Activated CD4-positive, alpha-beta T cell treated with anti-CD3 and anti-CD28 coated beads for 36 hours (primary cell): ENCODE measurements at regions of chr1 and their contacts with region 1.

Region 1: GRCh38 chr1:42035830-42036604 is 117.2 kb upstream of the GUCA2B start:
- DNase-seq: peak; percentile 99
- ATAC-seq: peak; percentile 92
- H3K4me3 Mint-ChIP-seq: peak overlapping the region; percentile 76
- H3K27ac Mint-ChIP-seq: peak overlapping the region; percentile 72
- H3K4me1 Mint-ChIP-seq: peaks cover 35% of the 10 kb centered on the region
- H3K27me3 Mint-ChIP-seq: no peaks in the 10 kb centered on the region

Region 2: GRCh38 chr1:41573785-41574713 is 462.0 kb before region 1 on chr1:
- CTCF ChIA-PET with region 1: no interaction called
- POLR2A ChIA-PET with region 1: no interaction called
- intact Hi-C with region 1: loop called in 1 of 2 experiments (anchors 1 kb)
- DNase-seq: peak; percentile 90
- ATAC-seq: peak; percentile 93
- H3K4me3 Mint-ChIP-seq: no peak overlapping the region
- H3K27ac Mint-ChIP-seq: peak overlapping the region; percentile 17
- H3K4me1 Mint-ChIP-seq: peaks cover 41% of the 10 kb centered on the region
- H3K27me3 Mint-ChIP-seq: no peaks in the 10 kb centered on the region

Region 3: DNA sequence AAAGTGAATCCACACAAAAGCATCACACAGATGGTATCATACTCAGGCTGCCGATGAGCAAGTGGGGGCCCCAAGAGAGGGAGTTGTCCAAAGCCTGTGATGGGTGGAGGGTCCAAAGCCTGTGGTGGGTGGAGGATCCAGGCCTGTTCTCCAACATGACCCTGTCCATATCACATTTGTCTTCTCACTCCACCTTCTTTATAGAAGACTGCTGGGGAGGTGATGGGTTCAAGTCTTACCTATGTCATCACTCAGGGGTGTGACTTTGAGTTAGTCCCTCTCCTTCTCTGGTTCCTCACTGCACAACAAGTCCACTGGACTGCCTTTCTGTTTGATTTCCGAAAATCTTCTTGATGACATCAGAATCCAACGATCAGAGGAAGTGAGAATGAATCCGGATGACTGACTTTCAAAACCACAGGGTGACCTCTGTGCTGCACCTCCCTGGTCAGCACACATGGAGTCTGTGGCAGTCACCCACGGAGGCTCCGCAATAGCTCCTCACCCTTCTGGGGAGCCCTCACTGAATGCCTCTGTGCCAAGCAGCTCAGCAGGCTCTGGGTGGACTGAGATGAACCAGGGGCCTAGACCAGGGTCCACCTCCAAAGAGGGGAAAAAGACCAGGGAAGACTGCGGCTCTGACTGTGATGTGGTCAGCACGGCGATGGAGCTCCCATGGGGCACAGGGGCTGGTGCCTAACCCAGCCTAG is 284.1 kb before region 1 on chr1:
- CTCF ChIA-PET with region 1: no interaction called
- POLR2A ChIA-PET with region 1: no interaction called
- intact Hi-C with region 1: loop called in 1 of 2 experiments (anchors 2 kb)
- DNase-seq: peak; percentile 30
- ATAC-seq: peak; percentile 17
- H3K4me3 Mint-ChIP-seq: no peak overlapping the region
- H3K27ac Mint-ChIP-seq: peak overlapping the region; percentile 90
- H3K4me1 Mint-ChIP-seq: peaks cover 73% of the 10 kb centered on the region
- H3K27me3 Mint-ChIP-seq: no peaks in the 10 kb centered on the region

Region 4: GRCh38 chr1:41830726-41831125 is 205.3 kb before region 1 on chr1:
- CTCF ChIA-PET with region 1: no interaction called
- POLR2A ChIA-PET with region 1: no interaction called
- intact Hi-C with region 1: no loop called
- DNase-seq: no peak
- ATAC-seq: no peak
- H3K4me3 Mint-ChIP-seq: no peak overlapping the region
- H3K27ac Mint-ChIP-seq: no peak overlapping the region
- H3K4me1 Mint-ChIP-seq: no peaks in the 10 kb centered on the region
- H3K27me3 Mint-ChIP-seq: peaks cover 2% of the 10 kb centered on the region

Region 5: DNA sequence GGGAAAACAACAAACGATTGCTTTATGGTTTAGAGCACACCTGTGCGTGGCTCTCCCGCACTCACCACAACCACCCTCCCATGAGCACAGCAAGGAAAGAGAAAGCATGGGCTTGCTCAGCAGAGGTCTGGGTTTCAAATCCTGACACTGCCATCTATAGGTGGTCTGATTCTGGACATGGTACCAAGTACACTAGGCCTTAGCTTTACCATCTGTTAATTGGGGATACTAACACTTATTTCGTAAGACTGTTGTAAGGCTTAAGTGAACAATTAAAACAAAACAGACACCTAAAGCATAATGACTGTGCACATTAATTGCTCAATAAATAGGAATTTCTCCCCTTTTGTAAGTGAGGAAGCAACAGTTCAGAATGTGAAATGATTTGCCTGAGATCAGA is 167.4 kb before region 1 on chr1:
- CTCF ChIA-PET with region 1: no interaction called
- POLR2A ChIA-PET with region 1: no interaction called
- intact Hi-C with region 1: loop called in 1 of 2 experiments (anchors 5 kb)
- DNase-seq: peak; percentile 61
- ATAC-seq: peak; percentile 85
- H3K4me3 Mint-ChIP-seq: no peak overlapping the region
- H3K27ac Mint-ChIP-seq: no peak overlapping the region
- H3K4me1 Mint-ChIP-seq: peaks cover 32% of the 10 kb centered on the region
- H3K27me3 Mint-ChIP-seq: no peaks in the 10 kb centered on the region

Region 6: GRCh38 chr1:42017259-42017658 is 18.8 kb before region 1 on chr1:
- CTCF ChIA-PET with region 1: no interaction called
- POLR2A ChIA-PET with region 1: no interaction called
- intact Hi-C with region 1: loop called in 1 of 2 experiments (anchors 1 kb)
- DNase-seq: no peak
- ATAC-seq: peak; percentile 97
- H3K4me3 Mint-ChIP-seq: no peak overlapping the region
- H3K27ac Mint-ChIP-seq: no peak overlapping the region
- H3K4me1 Mint-ChIP-seq: peaks cover 44% of the 10 kb centered on the region
- H3K27me3 Mint-ChIP-seq: no peaks in the 10 kb centered on the region

Region 7: DNA sequence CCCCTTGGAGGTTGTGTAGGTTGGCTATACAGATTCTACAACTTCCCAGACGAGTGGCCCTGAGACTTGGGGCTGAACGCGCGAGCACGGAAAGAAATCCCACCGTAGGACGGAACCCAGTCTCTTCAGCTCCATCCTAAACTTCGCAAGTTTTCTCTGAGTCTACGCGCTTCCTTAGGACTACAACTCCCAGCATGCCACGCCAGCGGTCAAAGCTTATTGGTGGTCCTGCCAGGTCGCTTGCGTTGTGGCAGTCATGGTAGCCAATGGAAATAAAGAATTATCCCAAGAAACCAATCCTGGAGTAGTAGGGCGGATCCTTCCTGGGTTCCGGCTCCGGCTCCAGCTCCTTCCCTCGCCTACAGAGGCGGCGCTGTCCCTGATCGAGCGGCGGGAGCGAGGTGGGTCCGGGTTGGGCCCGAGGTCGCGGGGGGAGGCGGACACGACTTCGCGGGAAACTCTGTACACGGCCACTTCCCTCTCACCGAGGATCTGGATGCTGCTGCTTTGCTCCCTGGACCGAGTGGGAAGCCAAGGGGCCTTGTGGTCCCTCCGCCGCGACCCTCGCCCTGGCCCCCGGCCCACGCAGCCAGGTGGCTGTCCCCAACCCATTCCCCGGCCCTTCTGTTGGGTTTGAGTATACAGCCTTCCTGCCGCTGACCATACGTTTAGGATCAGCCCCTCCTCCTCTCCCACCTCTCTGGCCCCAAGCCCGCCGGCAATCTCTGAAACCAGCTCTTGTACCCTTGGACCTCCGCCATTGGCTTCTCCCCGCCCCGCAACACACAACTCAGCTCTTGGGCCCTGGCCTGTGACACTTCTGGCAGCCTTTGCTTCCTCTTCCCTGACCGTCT is 810.5 kb after region 1 on chr1 and contains the start of gene ZNF691:
- CTCF ChIA-PET with region 1: no interaction called
- POLR2A ChIA-PET with region 1: no interaction called
- intact Hi-C with region 1: loop called in 1 of 2 experiments (anchors 2 kb)
- DNase-seq: peak; percentile 94
- ATAC-seq: peak; percentile 93
- H3K4me3 Mint-ChIP-seq: peak within 1 kb of the TSS; percentile 97
- H3K27ac Mint-ChIP-seq: peak within 1 kb of the TSS; percentile 89
- H3K4me1 Mint-ChIP-seq: peaks cover 34% of the 10 kb centered on the region
- H3K27me3 Mint-ChIP-seq: no peaks in the 10 kb centered on the region
- total RNA-seq, gene ZNF691: 10.5 to 11.7 TPM